Left colon (tissue), 2 donors: ENCODE measurements at regions of chr1 and their contacts with region 1.

Region 1: GRCh38 chr1:211705467-211706091 is 30.2 kb upstream of the NEK2 start:
- DNase-seq: no peak
- ATAC-seq: no peak

Region 2: DNA sequence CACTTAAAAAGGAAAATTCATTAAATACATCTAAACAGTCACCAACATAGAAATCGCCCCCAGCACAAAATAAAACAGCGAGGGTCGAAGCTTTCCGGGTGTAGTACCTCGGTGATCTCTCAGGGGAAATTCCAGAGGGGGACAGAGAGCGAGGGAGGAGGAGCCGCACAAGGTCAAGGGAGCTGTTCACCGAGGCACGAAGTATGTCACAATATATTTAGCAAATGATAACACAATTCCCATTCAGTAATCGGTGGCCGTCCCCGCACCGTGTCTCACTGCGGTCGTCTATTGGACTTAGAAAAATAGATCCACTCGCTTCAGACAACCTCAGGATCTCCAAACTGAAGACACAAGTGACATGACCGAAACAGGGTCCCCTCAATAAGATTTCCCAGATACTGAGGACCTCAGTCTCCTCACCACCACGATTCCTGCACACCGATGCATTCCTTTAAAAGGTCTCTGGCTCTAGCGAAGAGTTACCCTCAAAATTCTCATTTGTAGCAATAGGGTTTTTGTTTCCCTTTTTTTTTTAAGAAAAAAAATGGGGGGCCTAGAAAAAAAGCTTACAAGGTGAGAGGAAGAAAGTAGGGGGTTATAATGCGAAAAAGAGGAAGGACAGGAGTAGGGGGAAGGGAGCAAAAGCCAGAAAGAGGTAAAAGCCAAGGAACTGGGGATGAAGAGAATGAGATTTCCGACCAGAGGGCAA is 123.9 kb after region 1 on chr1:
- intact Hi-C with region 1: loop called in 1 of 2 experiments (anchors 10 kb)
- DNase-seq: peak; percentile 14 to 35
- ATAC-seq: peak; percentile 18

Region 3: DNA sequence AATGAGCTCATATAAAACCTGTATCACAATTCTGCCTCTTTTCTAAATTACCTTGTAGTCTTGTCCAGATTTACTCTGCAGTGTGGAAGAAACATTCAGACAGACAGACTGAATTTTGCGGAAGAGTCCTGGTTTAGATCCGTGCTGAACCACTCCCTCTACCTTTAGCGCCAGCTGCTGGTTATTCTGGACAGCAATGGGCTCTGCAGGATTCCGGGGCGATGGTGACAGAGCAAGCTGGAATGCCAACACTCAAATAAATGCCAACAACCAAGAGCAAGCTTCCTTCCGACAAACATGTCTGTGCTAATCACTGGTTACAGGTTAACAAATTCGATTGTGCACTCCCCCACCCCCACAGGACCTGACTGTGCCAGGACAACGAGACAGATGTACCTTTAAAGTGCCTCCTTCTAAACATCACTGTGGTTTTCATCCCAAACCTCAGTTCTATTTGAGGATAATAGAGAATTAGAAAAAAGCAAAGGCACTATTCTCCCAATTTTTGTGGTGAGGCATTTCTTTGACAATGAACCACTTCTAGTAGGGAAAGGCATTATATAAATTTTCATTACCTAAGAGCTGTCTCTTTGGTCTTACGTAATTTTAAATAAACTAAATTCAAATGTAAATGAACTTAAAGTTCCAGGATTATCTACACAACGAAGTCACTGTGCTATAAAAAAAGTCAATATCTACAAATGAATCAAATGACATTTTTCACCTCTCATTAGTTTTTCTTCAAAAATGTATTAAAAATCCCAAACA is 239.3 kb after region 1 on chr1:
- intact Hi-C with region 1: loop called in 1 of 2 experiments (anchors 10 kb)
- DNase-seq: peak; percentile 66 to 67
- ATAC-seq: peak; percentile 89